Stomach (tissue), 19 donors: ENCODE measurements at regions of chr17 and their contacts with region 1.

Region 1: DNA sequence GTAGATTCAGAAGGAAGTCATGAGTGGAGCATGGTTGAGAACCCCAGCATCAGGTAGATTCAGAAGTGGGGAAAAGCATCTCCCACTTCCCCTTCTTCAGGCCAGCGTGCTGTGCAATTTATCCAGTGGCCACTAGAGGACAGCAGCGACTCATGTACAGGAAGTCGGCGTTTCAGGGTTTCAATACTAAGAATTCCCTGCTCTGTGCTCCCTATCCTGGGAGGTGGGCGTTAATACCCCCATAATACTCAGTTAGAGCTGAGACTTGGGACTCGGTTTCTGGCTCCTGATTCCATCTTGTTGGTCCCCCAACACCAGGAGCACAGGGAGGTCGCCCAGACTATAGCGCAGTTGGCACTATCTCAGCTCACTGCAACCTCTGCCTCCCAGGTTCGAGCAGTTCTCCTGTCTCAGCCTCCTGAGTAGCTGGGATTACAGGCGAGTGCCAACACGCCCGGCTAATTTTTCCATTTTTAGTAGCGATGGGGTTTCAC is 75.3 kb upstream of the AMZ2 start:
- DNase-seq: peak; percentile 82 to 86
- H3K4me3 ChIP-seq: no peak overlapping the region
- H3K27ac ChIP-seq: no peak overlapping the region
- H3K4me1 ChIP-seq: peaks cover 0 to 6% (median 3%) of the 10 kb centered on the region in 4 donors
- H3K27me3 ChIP-seq: no peaks in the 10 kb centered on the region
- CTCF ChIP-seq: peak in 6 of 7 experiments; percentile 6 to 98 (median 92)
- EP300 ChIP-seq: no peak
- POLR2A ChIP-seq: no peak

Region 2: GRCh38 chr17:68141050-68141449 is 31.5 kb before region 1 on chr17:
- intact Hi-C with region 1: no loop called
- DNase-seq: no peak
- H3K4me3 ChIP-seq: no peak overlapping the region
- H3K27ac ChIP-seq: no peak overlapping the region
- H3K4me1 ChIP-seq: no peaks in the 10 kb centered on the region
- H3K27me3 ChIP-seq: no peaks in the 10 kb centered on the region
- CTCF ChIP-seq: no peak
- EP300 ChIP-seq: no peak
- POLR2A ChIP-seq: no peak

Region 3: GRCh38 chr17:68291844-68292695 is 119.6 kb after region 1 on chr17:
- intact Hi-C with region 1: no loop called
- DNase-seq: peak; percentile 76 to 91
- H3K4me3 ChIP-seq: peak overlapping the region; percentile 55 to 83 (median 60)
- H3K27ac ChIP-seq: peak overlapping the region; percentile 79 to 87 (median 80)
- H3K4me1 ChIP-seq: peaks cover 24 to 53% (median 30%) of the 10 kb centered on the region in 4 donors
- H3K27me3 ChIP-seq: peaks cover 5 to 69% (median 19%) of the 10 kb centered on the region in 3 donors
- CTCF ChIP-seq: peak in 1 of 7 experiments; percentile 6
- EP300 ChIP-seq: no peak
- POLR2A ChIP-seq: peak in 2 of 4 donors; percentile 11 to 42

Region 4: GRCh38 chr17:68462381-68463210 is 290.1 kb after region 1 on chr17:
- intact Hi-C with region 1: loop called (anchors 10 kb)
- DNase-seq: peak; percentile 77 to 94
- H3K4me3 ChIP-seq: no peak overlapping the region
- H3K27ac ChIP-seq: peak overlapping the region in 2 of 5 donors; percentile 29 to 57
- H3K4me1 ChIP-seq: peaks cover 10 to 38% (median 18%) of the 10 kb centered on the region in 4 donors
- H3K27me3 ChIP-seq: no peaks in the 10 kb centered on the region
- CTCF ChIP-seq: peak in 5 of 7 experiments; percentile 26 to 80 (median 77)
- EP300 ChIP-seq: no peak
- POLR2A ChIP-seq: no peak